ENCODE measurements at regions of chr22 and their contacts with region 1.

Region 1: GRCh38 chr22:32103658-32104315 is 55.3 kb downstream of the C22orf42 start:
- DNase-seq: no peak
- ATAC-seq: no peak
- H3K4me3 ChIP-seq: no peak overlapping the region
- H3K27ac ChIP-seq: no peak overlapping the region
- H3K4me1 ChIP-seq: no peaks in the 10 kb centered on the region
- H3K27me3 ChIP-seq: no peaks in the 10 kb centered on the region
- CTCF ChIP-seq: no peak
- POLR2A ChIP-seq: no peak

Region 2: DNA sequence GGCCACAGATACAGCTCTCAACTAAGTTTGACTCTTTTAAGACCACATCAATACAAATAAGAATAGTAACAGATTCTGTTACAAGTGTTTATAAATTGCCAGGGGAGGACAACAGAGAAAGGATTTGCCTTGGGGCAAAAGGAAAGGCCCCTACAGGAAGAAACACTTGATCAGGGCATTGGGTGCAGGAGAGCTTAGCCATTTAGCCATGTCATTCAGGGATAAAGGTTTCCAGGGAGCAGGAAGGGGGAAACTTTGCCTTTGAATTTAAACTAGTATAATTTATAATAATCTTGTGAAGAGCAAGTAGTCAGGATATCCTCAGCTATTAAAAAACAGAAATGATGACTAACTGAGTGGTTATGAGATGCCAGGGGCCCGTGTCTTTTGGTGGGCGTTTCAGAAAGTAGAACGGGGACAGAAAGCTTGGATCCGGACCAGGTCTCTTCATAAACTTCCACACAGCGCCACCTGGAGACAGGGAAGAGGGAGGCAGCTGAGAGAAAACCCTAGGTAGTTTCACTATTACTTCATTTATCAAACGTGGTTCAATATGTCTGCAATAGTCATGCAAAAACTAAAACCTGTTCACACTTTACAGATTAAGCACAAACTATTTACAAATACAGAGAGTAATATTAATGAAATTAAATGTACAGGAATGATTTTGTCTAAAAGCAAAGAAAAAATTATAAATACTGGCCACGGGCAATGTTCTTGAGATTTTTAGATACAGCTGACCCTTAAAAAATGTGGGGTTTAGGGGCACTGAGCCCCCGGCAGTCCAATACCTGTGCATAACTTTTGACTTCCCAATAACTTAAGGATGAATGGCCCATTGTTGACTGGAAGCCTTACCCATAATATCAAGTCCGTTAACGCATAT is 162.3 kb after region 1 on chr22:
- in situ Hi-C with region 1: loop called in 2 of 4 experiments (anchors 5 to 10 kb)
- intact Hi-C with region 1: no loop called
- DNase-seq: peak; percentile 15 to 50
- ATAC-seq: peak; percentile 58 to 79
- H3K4me3 ChIP-seq: peak overlapping the region in 3 of 4 donors; percentile 17 to 25 (median 21)
- H3K27ac ChIP-seq: peak overlapping the region in 2 of 4 donors; percentile 9 to 23
- H3K4me1 ChIP-seq: peaks cover 3 to 4% of the 10 kb centered on the region in 2 donors
- H3K27me3 ChIP-seq: no peaks in the 10 kb centered on the region
- CTCF ChIP-seq: peak; percentile 56 to 79 (median 66)
- POLR2A ChIP-seq: no peak